Gastrocnemius medialis (tissue), 4 donors: ENCODE measurements at regions of chr1 and their contacts with region 1.

Region 1: GRCh38 chr1:226662642-226663326 is 76.3 kb downstream of the ITPKB start:
- DNase-seq: peak; percentile 88 to 92
- ATAC-seq: peak; percentile 68 to 73
- H3K4me3 ChIP-seq: no peak overlapping the region
- H3K27ac ChIP-seq: no peak overlapping the region
- H3K4me1 ChIP-seq: peaks cover 94 to 99% of the 10 kb centered on the region in 2 donors
- H3K27me3 ChIP-seq: no peaks in the 10 kb centered on the region
- CTCF ChIP-seq: no peak
- POLR2A ChIP-seq: peak; percentile 60 to 66

Region 2: GRCh38 chr1:226708342-226708780 is 45.6 kb after region 1 on chr1:
- in situ Hi-C with region 1: no loop called
- intact Hi-C with region 1: loop called (anchors 1 kb)
- DNase-seq: peak; percentile 53 to 58
- ATAC-seq: peak; percentile 63 to 90
- H3K4me3 ChIP-seq: no peak overlapping the region
- H3K27ac ChIP-seq: peak overlapping the region; percentile 66 to 82 (median 76)
- H3K4me1 ChIP-seq: peaks cover 31 to 45% of the 10 kb centered on the region in 2 donors
- H3K27me3 ChIP-seq: no peaks in the 10 kb centered on the region
- CTCF ChIP-seq: no peak
- POLR2A ChIP-seq: no peak

Region 3: DNA sequence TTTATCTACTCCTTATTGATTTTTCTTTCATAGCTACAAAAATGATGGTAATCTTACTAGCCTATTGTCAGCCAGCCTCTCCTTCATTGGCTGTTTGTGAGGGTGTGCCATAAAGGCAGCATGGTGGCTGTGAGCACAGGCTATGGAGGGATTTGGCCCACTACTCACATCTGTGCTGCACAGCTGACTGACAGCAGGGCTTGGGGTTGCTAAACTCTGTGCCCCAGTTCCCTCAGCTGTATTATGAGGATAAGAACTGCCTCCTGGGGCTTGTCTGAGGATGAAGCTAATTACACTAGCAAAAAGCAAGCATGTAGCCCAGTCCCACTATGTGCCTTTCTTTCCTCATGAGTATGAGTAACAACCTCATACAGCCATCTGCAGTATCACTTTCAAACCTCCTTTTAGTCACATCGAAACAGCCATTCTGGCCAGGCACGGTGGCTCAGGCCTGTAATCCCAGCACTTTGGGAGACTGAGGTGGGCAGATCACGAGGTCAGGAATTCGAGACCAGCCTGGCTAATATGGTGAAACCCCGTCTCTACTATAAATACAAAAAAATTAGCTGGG is 343.5 kb after region 1 on chr1:
- in situ Hi-C with region 1: no loop called
- intact Hi-C with region 1: no loop called
- DNase-seq: no peak
- ATAC-seq: no peak
- H3K4me3 ChIP-seq: no peak overlapping the region
- H3K27ac ChIP-seq: no peak overlapping the region
- H3K4me1 ChIP-seq: peaks cover 0 to 4% of the 10 kb centered on the region in 2 donors
- H3K27me3 ChIP-seq: no peaks in the 10 kb centered on the region
- CTCF ChIP-seq: no peak
- POLR2A ChIP-seq: no peak